ENCODE measurements at regions of chr10 and their contacts with region 1.

Region 1: GRCh38 chr10:7281429-7281828 is 129.4 kb downstream of the SFMBT2 start:
- DNase-seq: no peak

Region 2: GRCh38 chr10:7322623-7323022 is 41.2 kb after region 1 on chr10:
- intact Hi-C with region 1: no loop called
- DNase-seq: no peak

Region 3: DNA sequence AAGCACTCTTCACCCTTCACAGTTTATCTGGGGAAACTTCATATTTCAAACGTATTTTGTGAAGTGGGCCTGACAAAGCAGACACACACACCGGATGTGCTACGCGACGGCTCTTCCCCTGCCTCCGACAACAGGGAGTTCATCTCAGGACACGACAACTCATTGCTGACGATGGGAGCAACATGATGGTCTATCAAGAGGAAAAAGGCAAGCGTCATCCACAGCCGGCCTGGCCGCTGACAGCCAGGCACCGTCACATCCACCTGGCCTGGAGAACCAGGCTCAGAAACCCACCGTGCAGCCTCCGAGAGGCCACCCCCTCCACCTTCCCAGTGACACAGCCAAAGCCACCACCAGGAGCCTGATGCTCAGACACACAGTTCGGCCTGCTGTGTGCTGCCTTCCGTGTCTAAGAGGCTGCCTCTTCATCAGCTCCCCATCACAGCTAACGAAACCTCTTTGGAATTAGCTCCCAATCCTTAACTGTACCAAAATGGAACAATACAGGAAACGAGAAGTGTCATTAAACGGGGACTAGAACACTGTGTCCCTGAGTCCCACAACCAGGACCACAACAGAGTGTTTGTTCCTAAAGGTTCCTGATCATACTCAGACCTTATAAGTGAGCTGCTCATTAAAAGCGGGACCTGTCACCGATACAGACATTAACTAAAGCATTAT is 52.7 kb after region 1 on chr10:
- intact Hi-C with region 1: loop called (anchors 5 kb)
- DNase-seq: no peak